RWPE1 (cell line): ENCODE measurements at regions of chr4 and their contacts with region 1.

Region 1: GRCh38 chr4:112296949-112297880 is at the start of gene ALPK1:
- DNase-seq: peak; percentile 85
- H3K27ac ChIP-seq: no peak within 1 kb of the TSS
- CTCF ChIP-seq: no peak

Region 2: GRCh38 chr4:112222219-112222955 is 74.8 kb before region 1 on chr4:
- CTCF ChIA-PET with region 1: no interaction called
- POLR2A ChIA-PET with region 1: no interaction called
- DNase-seq: no peak
- H3K27ac ChIP-seq: no peak overlapping the region
- CTCF ChIP-seq: no peak

Region 3: GRCh38 chr4:112266821-112267220 is 30.4 kb before region 1 on chr4:
- CTCF ChIA-PET with region 1: interaction called, 11 read pairs
- POLR2A ChIA-PET with region 1: no interaction called
- DNase-seq: no peak
- H3K27ac ChIP-seq: no peak overlapping the region
- CTCF ChIP-seq: peak; percentile 27